ENCODE measurements at regions of chr19 and their contacts with region 1.

Region 1: DNA sequence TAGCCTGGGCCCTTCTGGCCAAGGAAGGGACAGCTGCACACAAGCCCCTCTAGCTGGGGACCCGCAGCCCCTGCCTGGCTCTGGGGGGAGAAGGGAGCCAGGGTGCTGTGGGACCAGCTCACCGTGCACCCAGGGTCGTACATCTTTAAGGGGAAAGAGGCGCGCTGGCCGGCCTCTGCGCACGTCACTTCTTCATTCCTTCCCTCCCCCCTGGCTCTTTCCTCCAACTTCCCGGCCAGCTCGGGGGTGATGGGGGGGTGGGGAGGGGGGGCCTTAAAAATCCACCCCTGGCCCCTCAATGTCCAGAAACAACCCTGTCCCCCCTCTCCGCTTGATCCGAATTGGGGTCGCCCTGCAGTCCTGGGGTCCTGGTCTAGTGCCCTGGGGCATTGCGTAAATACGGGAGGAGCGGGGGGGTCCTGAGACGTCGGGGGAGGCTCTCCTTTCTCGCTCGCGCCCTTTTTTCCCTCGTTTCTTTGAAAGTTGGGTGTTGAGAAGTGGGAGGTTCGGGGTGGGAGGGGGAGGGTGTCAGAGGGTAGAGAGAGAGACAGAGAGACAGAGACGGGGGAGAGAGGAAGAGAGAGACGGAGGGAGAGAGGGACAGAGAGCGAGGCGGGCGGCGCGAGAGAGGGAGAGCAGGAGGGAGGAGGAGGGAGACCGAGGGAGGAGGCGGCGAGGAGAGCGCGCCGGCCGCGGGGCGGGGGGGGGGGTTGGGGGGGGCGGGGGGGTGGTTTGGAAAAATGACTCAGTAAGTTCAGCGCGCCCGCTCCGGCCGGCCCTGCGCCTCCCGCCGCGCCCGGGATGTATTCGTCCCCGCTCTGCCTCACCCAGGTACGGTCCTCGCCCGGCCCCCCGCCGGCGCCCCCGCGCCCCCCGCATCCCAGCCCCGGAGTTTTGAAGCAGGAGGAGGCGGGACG is at the start of gene NFIC:
- DNase-seq: peak; percentile 95
- total RNA-seq, gene NFIC: 196 to 223 TPM

Region 2: DNA sequence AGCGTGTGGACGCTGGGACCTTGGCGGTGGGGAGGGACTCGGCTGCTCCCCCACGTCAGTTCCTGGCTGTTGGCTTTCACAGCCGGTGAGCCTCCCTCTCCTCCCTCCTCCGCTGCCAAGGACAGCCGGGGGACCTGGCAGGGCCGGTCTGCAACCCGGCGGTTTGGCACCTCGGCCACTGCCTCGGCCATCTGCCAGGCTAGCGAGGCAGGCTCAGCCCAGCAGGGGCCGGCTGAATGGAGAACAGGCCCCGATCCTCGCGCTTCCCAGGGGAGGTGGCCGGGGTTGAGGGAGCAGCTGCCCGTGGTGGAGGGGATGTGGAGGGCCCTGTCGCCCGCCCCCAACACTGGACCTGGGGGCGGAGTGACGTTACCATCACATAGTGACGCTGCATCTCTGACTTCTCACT is 308.8 kb before region 1 on chr19:
- intact Hi-C with region 1: no loop called
- DNase-seq: peak; percentile 96

Region 3: DNA sequence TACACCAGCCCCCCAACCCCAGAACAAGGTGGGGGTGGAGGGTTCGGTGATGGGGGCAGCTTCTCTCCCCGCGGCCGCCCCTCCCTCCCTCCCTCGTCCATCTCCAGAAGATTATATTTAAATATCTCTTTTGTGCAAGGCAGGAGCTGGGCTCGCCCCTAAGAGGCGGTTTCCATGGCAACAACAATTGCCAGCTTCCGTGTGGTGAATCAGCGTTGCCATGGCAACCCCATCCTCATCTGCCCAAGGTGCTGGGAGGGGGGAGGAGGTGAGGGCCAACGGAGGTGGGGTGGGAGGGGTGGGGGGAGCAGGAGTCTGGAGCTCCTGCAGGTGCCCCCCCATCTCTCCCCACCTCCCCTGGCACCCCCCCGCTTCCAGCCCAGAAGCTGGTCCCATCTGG is 95.2 kb before region 1 on chr19:
- intact Hi-C with region 1: no loop called
- DNase-seq: no peak

Region 4: GRCh38 chr19:3324321-3324856 is 41.7 kb before region 1 on chr19:
- intact Hi-C with region 1: loop called in 1 of 2 experiments (anchors 5 kb)
- DNase-seq: peak; percentile 88

Region 5: DNA sequence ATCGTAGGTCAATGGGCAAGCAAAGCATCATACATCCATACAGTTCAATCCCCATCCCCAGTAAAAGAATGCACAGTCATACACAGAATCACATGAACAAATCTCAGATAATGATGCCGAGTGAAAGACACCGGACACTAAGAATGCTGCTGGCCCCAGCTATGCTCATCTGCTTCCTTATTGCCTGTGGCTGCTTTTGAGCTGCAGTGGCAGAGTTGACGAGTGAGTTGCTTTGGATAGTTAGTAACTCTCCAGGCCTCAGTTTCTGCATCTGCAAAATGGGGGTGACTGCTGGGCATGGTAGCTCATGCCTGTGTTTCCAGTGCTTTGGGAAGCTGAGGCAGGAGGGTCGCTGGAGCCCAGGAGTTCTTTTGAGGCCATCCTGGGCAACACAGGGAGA is 12.6 kb before region 1 on chr19:
- intact Hi-C with region 1: loop called in 1 of 2 experiments (anchors 1 kb)
- DNase-seq: no peak

Region 6: GRCh38 chr19:3429581-3430080 is 63.5 kb after region 1 on chr19:
- intact Hi-C with region 1: loop called (anchors 5 to 10 kb)
- DNase-seq: peak; percentile 98

Region 7: GRCh38 chr19:3450796-3451411 is 84.8 kb after region 1 on chr19:
- intact Hi-C with region 1: loop called in 1 of 2 experiments (anchors 10 kb)
- DNase-seq: peak; percentile 96